GM23248 (cell line): ENCODE measurements at regions of chr7 and their contacts with region 1.

Region 1: DNA sequence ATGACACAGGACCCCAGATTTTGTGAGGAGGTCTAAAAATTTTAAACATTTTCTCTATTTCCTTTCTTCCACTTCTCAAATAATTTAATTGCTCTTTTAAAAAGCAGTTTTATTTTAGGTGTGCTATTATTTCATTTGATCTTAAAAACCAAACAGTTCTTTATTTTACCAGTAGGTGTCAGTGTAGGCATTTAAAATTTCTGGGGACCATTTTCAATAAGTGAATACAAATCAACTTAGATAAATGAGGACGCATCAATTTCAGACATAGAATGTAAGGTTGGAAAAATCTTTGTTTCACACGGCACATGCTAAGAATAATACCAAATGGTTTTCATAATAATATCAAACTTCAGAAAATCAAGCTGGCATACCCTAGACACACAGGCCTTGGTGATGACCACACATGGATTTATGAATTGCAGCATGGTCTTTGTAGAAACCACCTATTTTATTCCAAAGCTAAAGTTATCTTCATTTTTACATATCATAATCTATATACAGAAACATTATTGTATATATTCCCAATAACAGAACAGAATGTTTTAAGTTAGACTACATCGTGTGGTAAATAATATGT is 127.6 kb upstream of the SLC26A5 start:
- DNase-seq: peak; percentile 41
- H3K4me3 ChIP-seq: no peak overlapping the region
- H3K27ac ChIP-seq: no peak overlapping the region
- H3K4me1 ChIP-seq: no peaks in the 10 kb centered on the region
- H3K27me3 ChIP-seq: no peaks in the 10 kb centered on the region

Region 2: GRCh38 chr7:103894656-103895596 is 321.4 kb after region 1 on chr7:
- in situ Hi-C with region 1: no loop called
- DNase-seq: no peak
- H3K4me3 ChIP-seq: no peak overlapping the region
- H3K27ac ChIP-seq: no peak overlapping the region
- H3K4me1 ChIP-seq: no peaks in the 10 kb centered on the region
- H3K27me3 ChIP-seq: no peaks in the 10 kb centered on the region

Region 3: DNA sequence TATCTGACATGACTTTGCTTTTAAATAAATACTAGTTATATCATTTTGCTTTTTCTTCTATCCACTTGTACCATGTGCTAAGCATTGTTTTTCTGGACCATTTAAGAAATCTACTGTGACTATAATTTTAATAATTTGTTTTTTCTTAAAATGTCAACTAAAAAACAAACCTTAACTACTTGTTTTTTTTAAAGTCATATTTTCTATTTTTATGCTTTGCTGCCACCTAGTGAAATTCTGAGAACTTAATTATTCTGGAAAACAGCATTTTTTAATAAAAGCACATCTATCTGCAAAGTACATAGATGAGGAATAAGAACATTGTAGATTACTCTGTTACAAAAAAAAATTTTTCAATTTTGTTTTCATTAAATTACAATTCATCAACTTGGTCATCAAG is 586.8 kb after region 1 on chr7:
- in situ Hi-C with region 1: loop called (anchors 10 kb)
- DNase-seq: peak; percentile 50
- H3K4me3 ChIP-seq: no peak overlapping the region
- H3K27ac ChIP-seq: no peak overlapping the region
- H3K4me1 ChIP-seq: no peaks in the 10 kb centered on the region
- H3K27me3 ChIP-seq: no peaks in the 10 kb centered on the region